Transverse colon (tissue), 4 donors: ENCODE measurements at regions of chr12 and their contacts with region 1.

Region 1: GRCh38 chr12:14723763-14724162 is 27.4 kb upstream of the GUCY2C start:
- DNase-seq: peak; percentile 59
- H3K4me3 ChIP-seq: no peak overlapping the region
- H3K27ac ChIP-seq: no peak overlapping the region
- H3K4me1 ChIP-seq: no peaks in the 10 kb centered on the region
- H3K27me3 ChIP-seq: no peaks in the 10 kb centered on the region
- CTCF ChIP-seq: peak; percentile 55 to 75 (median 72)
- EP300 ChIP-seq: no peak
- POLR2A ChIP-seq: no peak

Region 2: DNA sequence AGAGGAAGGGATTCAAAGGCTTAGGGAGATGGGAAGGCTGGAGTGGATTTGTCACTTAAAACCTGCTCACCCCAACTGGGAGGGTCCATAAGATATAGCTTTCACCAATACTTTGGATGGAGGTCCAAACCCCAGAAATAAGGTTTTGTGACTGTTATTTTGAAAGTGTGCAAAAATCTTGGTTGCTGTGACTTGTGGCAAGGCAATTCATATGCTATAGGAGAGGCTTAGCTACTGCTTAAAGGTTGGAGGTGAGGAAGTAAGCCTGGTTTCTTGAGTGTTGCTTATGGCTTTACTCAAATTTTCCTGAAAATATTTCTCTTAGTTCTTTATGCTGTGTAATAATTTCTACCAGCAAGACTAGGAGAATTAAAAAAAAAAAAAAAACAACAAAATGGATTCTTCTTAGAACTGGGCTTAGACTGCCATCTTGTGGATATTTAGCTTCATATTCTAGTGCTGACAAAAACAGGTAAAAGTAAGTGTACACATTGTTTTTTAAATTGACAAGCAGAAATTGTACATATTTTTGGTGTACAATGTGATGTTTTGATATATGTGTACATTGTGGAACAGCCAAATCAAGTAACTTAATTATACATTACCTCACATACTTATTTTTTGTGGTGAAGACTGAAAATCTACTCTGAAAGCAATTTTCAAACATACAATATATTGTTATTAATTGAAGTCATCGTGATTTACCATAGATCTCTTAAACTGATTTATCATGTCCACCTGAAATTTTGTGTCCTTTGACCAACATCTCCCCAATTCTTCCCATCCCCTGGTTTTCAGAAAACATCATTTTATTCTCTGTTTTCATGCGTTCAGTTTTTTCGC is 272.0 kb after region 1 on chr12:
- in situ Hi-C with region 1: loop called in 1 of 4 experiments (anchors 10 kb)
- intact Hi-C with region 1: no loop called
- DNase-seq: no peak
- H3K4me3 ChIP-seq: no peak overlapping the region
- H3K27ac ChIP-seq: no peak overlapping the region
- H3K4me1 ChIP-seq: peaks cover 0 to 20% (median 2%) of the 10 kb centered on the region in 4 donors
- H3K27me3 ChIP-seq: no peaks in the 10 kb centered on the region
- CTCF ChIP-seq: peak; percentile 63 to 83 (median 68)
- EP300 ChIP-seq: no peak
- POLR2A ChIP-seq: no peak